Colonic mucosa (tissue), 4 donors: ENCODE measurements at regions of chr1 and their contacts with region 1.

Region 1: GRCh38 chr1:17043656-17044055 is 10.2 kb downstream of the SDHB start:
- DNase-seq: no peak
- H3K4me3 ChIP-seq: no peak overlapping the region
- H3K27ac ChIP-seq: no peak overlapping the region
- H3K4me1 ChIP-seq: no peaks in the 10 kb centered on the region
- H3K27me3 ChIP-seq: no peaks in the 10 kb centered on the region
- CTCF ChIP-seq: no peak

Region 2: DNA sequence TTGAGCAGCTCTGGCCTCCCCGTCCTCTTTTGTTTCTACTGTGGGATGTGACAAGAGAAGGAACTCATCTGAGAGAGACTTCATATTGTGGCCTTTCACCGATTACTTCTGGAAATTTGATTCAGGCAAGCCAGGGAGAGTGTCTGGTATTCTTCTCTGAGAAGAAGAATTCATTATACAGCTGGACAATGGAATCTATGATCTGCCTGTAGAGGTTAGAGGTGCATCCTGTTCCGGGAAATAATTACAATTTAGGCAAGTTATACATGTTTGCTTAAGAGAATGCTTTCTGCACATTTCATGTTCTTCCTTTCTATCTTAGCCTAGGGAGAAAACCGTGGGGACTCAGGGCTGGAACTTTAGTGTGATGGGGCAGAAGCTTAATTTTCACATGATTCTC is 160.6 kb before region 1 on chr1:
- intact Hi-C with region 1: no loop called
- DNase-seq: no peak
- H3K4me3 ChIP-seq: no peak overlapping the region
- H3K27ac ChIP-seq: no peak overlapping the region
- H3K4me1 ChIP-seq: no peaks in the 10 kb centered on the region
- H3K27me3 ChIP-seq: no peaks in the 10 kb centered on the region
- CTCF ChIP-seq: no peak

Region 3: GRCh38 chr1:16958503-16958902 is 85.2 kb before region 1 on chr1:
- intact Hi-C with region 1: loop called (anchors 5 kb)
- DNase-seq: no peak
- H3K4me3 ChIP-seq: no peak overlapping the region
- H3K27ac ChIP-seq: no peak overlapping the region
- H3K4me1 ChIP-seq: no peaks in the 10 kb centered on the region
- H3K27me3 ChIP-seq: no peaks in the 10 kb centered on the region
- CTCF ChIP-seq: no peak